Ovary (tissue), 10 donors: ENCODE measurements at regions of chr15 and their contacts with region 1.

Region 1: GRCh38 chr15:23416349-23417276 is 30.4 kb downstream of the GOLGA6L2 start:
- DNase-seq: no peak
- H3K4me3 ChIP-seq: no peak overlapping the region
- H3K27ac ChIP-seq: no peak overlapping the region
- H3K4me1 ChIP-seq: no peaks in the 10 kb centered on the region
- H3K27me3 ChIP-seq: no peaks in the 10 kb centered on the region
- CTCF ChIP-seq: no peak
- EP300 ChIP-seq: no peak
- POLR2A ChIP-seq: no peak

Region 2: GRCh38 chr15:23467110-23467600 is 50.5 kb after region 1 on chr15:
- intact Hi-C with region 1: loop called in 1 of 4 experiments (anchors 5 kb)
- DNase-seq: no peak
- H3K4me3 ChIP-seq: no peak overlapping the region
- H3K27ac ChIP-seq: no peak overlapping the region
- H3K4me1 ChIP-seq: no peaks in the 10 kb centered on the region
- H3K27me3 ChIP-seq: no peaks in the 10 kb centered on the region
- CTCF ChIP-seq: no peak
- EP300 ChIP-seq: no peak
- POLR2A ChIP-seq: no peak

Region 3: DNA sequence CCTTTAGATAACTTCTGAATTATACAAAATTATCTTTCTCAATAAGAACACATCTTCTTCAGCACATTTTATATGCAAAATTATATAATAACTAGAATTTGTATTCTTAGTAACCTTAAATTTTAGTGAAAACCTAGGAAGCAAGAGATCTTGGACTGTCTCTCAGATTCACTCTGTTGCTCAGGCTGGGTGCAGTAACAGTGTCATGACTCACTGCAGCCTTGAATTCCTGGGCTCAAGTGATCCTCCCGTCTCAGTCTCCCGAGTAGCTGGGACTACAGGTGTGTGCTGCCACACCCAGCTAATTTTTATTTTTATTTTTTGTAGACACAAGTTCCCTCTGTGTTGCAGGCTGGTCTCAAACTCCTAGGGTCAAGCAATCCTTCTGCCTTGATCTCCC is 178.8 kb after region 1 on chr15:
- intact Hi-C with region 1: no loop called
- DNase-seq: no peak
- H3K4me3 ChIP-seq: no peak overlapping the region
- H3K27ac ChIP-seq: no peak overlapping the region
- H3K4me1 ChIP-seq: no peaks in the 10 kb centered on the region
- H3K27me3 ChIP-seq: no peaks in the 10 kb centered on the region
- CTCF ChIP-seq: no peak
- EP300 ChIP-seq: no peak
- POLR2A ChIP-seq: no peak